Vagina (tissue), 2 donors: ENCODE measurements at regions of chr10 and their contacts with region 1.

Region 1: GRCh38 chr10:29127037-29127700 is 161.7 kb upstream of the LYZL1 start:
- DNase-seq: no peak
- H3K4me3 ChIP-seq: no peak overlapping the region
- H3K27ac ChIP-seq: no peak overlapping the region
- H3K4me1 ChIP-seq: no peaks in the 10 kb centered on the region
- H3K27me3 ChIP-seq: no peaks in the 10 kb centered on the region
- CTCF ChIP-seq: no peak
- POLR2A ChIP-seq: no peak

Region 2: GRCh38 chr10:29223326-29223725 is 96.2 kb after region 1 on chr10:
- intact Hi-C with region 1: loop called (anchors 5 kb)
- DNase-seq: no peak
- H3K4me3 ChIP-seq: no peak overlapping the region
- H3K27ac ChIP-seq: no peak overlapping the region
- H3K4me1 ChIP-seq: no peaks in the 10 kb centered on the region
- H3K27me3 ChIP-seq: no peaks in the 10 kb centered on the region
- CTCF ChIP-seq: no peak
- POLR2A ChIP-seq: no peak